Esophagus muscularis mucosa (tissue), 4 donors: ENCODE measurements at regions of chr5 and their contacts with region 1.

Region 1: DNA sequence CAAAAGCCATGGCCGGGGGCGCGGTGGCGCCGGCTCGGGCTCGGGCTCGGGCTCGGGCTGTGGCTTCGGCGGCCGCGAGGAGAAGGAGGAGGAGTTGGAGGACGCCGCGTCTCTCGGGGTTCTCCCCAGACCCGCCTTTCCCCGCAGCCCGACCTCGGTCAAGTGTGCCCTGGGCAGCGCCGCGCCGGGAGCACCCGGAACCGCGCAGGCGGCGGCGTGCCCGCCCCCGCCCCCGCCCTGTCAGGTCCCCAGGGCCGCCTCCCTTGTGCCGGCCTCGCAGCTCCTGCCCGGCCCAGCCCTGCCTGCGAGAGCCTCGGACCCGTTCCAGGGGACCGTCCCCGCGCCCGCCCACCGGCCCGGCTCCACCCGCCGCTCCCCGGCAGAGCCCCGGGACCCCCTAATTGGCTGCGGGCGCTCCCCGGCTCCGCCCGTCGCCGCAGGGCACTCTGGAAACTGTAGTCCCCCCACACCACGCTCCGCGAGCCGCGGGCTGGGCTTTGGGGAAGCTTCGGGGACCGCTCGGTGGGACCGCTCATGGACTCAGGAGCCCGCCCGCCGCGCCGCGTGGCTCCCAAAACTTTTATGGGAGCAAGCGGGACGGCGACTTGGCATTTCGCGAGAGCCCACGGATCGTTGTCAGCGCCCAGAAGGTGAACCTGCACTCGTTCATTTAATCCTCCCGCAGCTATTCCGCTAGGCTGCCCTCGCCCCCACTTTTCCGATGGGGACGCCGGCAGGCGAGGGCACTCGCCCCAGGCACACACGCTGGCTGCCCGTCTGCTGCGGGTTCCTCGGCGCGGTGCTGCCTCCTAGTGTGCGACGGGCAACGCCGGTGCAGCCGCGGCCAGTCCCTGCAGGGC is at the start of gene STK10:
- DNase-seq: peak; percentile 96
- H3K4me3 ChIP-seq: peak within 1 kb of the TSS; percentile 82 to 94 (median 89)
- H3K27ac ChIP-seq: peak within 1 kb of the TSS; percentile 85 to 97 (median 92)
- H3K4me1 ChIP-seq: peaks cover 21 to 49% (median 40%) of the 10 kb centered on the region in 4 donors
- H3K27me3 ChIP-seq: no peaks in the 10 kb centered on the region
- CTCF ChIP-seq: peak; percentile 89 to 95 (median 90)
- EP300 ChIP-seq: no peak
- POLR2A ChIP-seq: no peak
- total RNA-seq, gene STK10: 18.8 to 21.8 (median 19.4) TPM

Region 2: GRCh38 chr5:172006321-172007174 is 181.7 kb before region 1 on chr5 and contains the start of gene FBXW11:
- intact Hi-C with region 1: loop called (anchors 5 kb)
- DNase-seq: peak; percentile 97
- H3K4me3 ChIP-seq: peak within 1 kb of the TSS; percentile 89 to 97 (median 92)
- H3K27ac ChIP-seq: peak within 1 kb of the TSS; percentile 91 to 98 (median 96)
- H3K4me1 ChIP-seq: peaks cover 45 to 54% (median 47%) of the 10 kb centered on the region in 4 donors
- H3K27me3 ChIP-seq: no peaks in the 10 kb centered on the region
- CTCF ChIP-seq: no peak
- EP300 ChIP-seq: no peak
- POLR2A ChIP-seq: peak; percentile 74
- total RNA-seq, gene FBXW11: 60.8 to 75.6 (median 66.3) TPM

Region 3: GRCh38 chr5:172106511-172107356 is 81.5 kb before region 1 on chr5:
- intact Hi-C with region 1: loop called (anchors 1 kb)
- DNase-seq: no peak
- H3K4me3 ChIP-seq: peak overlapping the region; percentile 38 to 47 (median 40)
- H3K27ac ChIP-seq: peak overlapping the region in 3 of 4 donors; percentile 38 to 70 (median 50)
- H3K4me1 ChIP-seq: peaks cover 57 to 75% (median 67%) of the 10 kb centered on the region in 4 donors
- H3K27me3 ChIP-seq: no peaks in the 10 kb centered on the region
- CTCF ChIP-seq: peak in 2 of 3 experiments; percentile 93 to 99
- EP300 ChIP-seq: no peak
- POLR2A ChIP-seq: no peak

Region 4: GRCh38 chr5:172293054-172293744 is 104.9 kb after region 1 on chr5:
- intact Hi-C with region 1: loop called (anchors 5 kb)
- DNase-seq: peak; percentile 90
- H3K4me3 ChIP-seq: no peak overlapping the region
- H3K27ac ChIP-seq: no peak overlapping the region
- H3K4me1 ChIP-seq: peaks cover 3 to 6% (median 4%) of the 10 kb centered on the region in 4 donors
- H3K27me3 ChIP-seq: no peaks in the 10 kb centered on the region
- CTCF ChIP-seq: peak; percentile 67 to 84 (median 76)
- EP300 ChIP-seq: no peak
- POLR2A ChIP-seq: no peak